ENCODE measurements at regions of chr2 and their contacts with region 1.

Region 1: DNA sequence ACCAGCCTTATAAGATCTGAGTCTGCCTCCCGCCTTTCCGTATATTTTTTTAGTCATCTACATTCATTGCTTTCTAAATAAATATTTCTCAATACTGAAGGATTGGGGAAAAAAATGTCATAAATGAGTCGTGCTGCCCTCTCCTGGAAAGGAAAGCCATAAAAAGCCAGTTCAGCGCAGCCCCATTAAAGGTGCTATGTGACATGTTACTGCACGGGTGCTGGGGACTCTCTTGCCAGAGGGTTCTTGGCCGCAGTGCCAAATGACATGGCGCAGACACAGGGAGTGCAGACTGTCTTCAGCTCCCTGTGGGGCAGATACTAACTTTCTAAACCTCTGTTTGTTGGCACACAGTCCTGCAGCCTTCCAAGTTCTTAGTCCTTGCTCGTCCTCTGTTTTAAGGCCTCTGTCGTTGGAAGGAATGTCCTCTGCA is 53.7 kb upstream of the MAP3K20 start:
- DNase-seq: no peak
- ATAC-seq: no peak
- H3K4me3 ChIP-seq: no peak overlapping the region
- H3K4me3 Mint-ChIP-seq: no peak overlapping the region
- H3K27ac ChIP-seq: no peak overlapping the region
- H3K27ac Mint-ChIP-seq: no peak overlapping the region
- H3K4me1 ChIP-seq: no peaks in the 10 kb centered on the region
- H3K4me1 Mint-ChIP-seq: no peaks in the 10 kb centered on the region
- H3K27me3 ChIP-seq: peaks cover 0 to 2% of the 10 kb centered on the region in 2 experiments
- H3K27me3 Mint-ChIP-seq: peaks cover 0 to 14% of the 10 kb centered on the region in 2 donors

Region 2: DNA sequence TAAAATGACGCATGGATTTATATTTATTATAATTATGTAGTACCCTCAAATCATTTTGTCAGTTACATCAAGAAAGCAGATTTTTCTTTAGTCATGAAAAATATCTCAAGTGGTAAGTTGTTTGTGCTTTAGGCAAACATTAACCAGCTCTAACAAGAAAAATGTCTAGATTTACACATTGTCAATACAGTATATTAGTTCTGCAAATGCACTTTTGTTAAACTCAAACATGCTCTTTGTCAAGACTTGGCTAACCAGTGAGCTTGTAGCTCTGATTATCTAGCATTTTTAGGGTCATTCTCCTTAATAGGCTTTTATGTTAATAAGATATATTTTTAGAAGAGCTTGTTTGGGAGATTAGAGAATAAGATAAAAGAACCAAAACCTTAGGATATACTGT is 1406.3 kb after region 1 on chr2:
- CTCF ChIA-PET with region 1: interaction called in 1 of 2 experiments, 3 read pairs
- POLR2A ChIA-PET with region 1: interaction called in 1 of 2 experiments, 14 read pairs
- DNase-seq: no peak
- ATAC-seq: no peak
- H3K4me3 ChIP-seq: no peak overlapping the region
- H3K4me3 Mint-ChIP-seq: no peak overlapping the region
- H3K27ac ChIP-seq: no peak overlapping the region
- H3K27ac Mint-ChIP-seq: no peak overlapping the region
- H3K4me1 ChIP-seq: no peaks in the 10 kb centered on the region
- H3K4me1 Mint-ChIP-seq: no peaks in the 10 kb centered on the region
- H3K27me3 ChIP-seq: no peaks in the 10 kb centered on the region
- H3K27me3 Mint-ChIP-seq: no peaks in the 10 kb centered on the region

Measured in T-cell (primary cell).